GM10248 (cell line): ENCODE measurements at regions of chr20 and their contacts with region 1.

Region 1: DNA sequence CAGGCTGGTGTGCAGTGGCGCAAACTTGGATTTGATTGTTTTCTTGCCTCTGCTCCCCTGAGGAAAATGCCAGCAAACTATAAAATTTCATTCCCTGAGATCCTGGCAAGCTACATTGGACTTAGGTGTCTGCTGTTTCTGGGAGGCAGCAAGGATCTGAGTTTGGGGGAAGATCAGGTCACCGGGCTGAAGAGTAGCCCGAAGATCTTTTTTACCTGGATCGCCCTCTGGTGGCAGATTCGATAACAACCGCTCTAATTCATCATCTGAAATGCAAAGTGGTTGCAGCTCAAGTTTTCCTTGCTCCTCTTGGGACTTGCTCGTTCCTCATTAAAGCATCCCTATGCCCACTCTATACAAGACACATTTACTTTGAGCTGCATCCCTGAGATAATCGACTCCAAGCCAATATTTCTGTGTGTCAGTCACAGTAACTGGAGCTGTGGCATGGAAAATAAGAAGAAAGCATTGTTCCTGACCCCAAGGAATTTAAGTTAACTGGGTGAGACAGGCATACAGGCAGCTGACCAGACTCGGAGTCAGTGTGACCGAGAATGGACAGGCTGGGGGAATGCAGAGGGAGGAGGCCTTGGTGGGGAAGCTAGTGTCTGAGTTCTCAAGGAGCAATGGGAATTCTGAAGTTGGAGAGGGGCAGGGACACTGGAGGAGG is 131.8 kb upstream of the PROKR2 start:
- DNase-seq: peak; percentile 62
- CTCF ChIP-seq: peak; percentile 69

Region 2: DNA sequence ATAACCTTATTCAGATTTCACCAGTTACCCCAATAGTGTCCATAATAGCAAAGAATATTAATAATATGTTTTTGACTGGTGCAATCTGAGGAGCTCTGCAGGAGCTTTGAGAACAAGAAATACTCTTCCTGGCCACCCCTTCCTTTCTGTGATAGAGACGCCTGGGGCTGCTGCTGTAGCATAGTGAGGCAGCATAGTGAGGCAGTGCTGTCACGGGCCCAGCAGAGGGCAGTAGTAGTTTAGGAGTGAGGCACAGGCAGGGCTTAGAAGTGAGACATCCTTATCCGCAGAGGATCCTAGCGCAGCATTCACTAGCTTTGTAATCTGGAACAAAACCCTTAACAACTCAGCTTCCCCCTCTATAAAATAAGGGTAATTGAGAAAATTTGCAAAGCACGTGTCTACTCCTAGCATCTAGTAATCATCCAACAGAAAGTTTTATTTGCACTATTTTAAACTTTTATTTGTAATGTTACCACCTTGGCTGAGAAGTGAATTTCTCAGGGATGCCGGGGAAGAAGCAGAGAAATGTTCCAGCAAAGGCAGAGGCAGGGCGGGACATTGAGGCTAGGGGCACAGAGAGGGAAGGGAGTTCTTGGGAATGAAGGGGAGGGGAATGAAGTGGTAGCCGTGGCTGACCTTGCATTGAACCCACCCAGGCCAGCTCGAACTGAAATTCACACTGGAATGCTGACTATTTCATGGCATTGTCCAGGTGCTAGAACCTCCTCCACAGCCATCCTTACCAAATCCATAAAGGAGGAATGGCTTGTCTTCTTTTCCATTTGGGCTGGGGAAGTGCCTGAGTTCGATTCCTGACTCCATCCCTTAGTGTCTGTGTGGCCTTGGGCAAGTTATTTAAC is 243.0 kb before region 1 on chr20:
- CTCF ChIA-PET with region 1: interaction called, 72 read pairs
- POLR2A ChIA-PET with region 1: no interaction called
- DNase-seq: peak; percentile 83
- CTCF ChIP-seq: peak; percentile 94

Region 3: DNA sequence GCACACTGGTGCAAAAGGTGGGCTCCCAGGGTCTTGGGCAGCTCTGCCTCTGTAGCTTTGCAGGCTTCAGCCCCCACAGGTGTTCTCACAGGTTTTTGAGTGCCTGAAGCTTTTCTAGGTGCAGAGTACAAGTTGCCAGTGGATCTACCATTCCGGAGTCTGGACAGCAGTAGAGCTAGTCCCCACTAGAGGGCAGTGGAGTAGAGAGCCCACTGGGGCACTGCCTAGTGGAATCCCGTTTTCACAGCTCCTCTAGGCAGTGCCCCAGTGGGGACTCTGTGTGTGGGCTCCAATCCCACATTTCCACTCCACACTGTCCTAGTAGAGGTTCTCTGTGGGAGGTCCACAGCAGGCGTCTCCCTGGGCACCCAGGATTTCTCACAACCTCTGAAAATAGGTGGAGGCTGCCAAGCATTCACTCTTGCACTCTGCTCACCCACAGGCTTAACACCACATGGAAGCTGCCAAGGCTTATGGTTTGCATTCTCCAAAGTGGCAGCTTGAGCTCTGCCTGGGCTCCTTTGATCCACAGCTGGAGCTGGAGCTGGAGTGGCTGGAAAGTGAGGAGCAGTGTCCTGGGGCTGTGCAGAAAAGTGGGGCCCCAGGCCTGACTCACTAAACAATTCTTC is 45.6 kb before region 1 on chr20:
- CTCF ChIA-PET with region 1: interaction called, 24 read pairs
- POLR2A ChIA-PET with region 1: no interaction called
- DNase-seq: peak; percentile 37
- CTCF ChIP-seq: peak; percentile 64

Region 4: GRCh38 chr20:5430670-5431069 is 17.9 kb before region 1 on chr20:
- CTCF ChIA-PET with region 1: interaction called, 13 read pairs
- POLR2A ChIA-PET with region 1: no interaction called
- DNase-seq: no peak
- CTCF ChIP-seq: no peak

Region 5: DNA sequence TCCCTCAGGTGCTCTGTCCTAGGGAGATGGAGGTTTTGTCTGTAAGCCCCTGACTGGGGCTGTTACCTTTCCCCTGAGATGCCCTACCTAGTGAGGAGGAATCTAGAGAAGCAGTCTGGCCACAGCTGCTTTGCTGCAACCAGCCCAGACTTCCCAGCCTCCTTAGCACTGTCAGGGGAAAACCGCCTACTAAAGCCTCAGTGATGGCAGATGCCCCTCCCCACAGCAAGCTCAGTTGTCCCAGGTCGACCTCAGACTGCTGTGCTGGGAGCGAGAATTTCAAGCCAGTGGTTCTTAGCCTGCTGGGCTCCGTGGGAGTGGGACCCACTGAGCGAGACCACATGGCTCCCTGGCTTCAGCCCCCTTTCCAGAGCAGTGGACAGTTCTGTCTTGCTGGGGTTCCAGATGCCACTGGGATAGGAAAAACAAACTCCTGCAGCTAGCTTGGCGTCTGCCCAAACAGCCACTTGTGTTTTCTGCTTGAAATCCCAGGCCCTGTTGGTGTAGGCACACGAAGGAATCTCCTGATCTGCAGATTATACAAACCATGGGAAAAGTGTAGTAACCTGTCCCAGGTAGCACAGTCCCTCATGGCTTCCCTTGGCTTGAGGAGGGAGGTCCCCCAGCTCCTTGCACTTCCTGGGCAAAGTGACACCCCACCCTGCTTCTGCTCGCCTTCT is 14.6 kb after region 1 on chr20:
- CTCF ChIA-PET with region 1: interaction called, 10 read pairs
- POLR2A ChIA-PET with region 1: no interaction called
- DNase-seq: no peak
- CTCF ChIP-seq: no peak

Region 6: GRCh38 chr20:5612476-5613301 is 164.1 kb after region 1 on chr20:
- CTCF ChIA-PET with region 1: no interaction called
- POLR2A ChIA-PET with region 1: no interaction called
- DNase-seq: no peak
- CTCF ChIP-seq: no peak